Heart left ventricle (tissue), 16 donors: ENCODE measurements at regions of chr4 and their contacts with region 1.

Region 1: GRCh38 chr4:157372567-157372966 is 152.0 kb downstream of the GRIA2 start:
- DNase-seq: no peak
- ATAC-seq: no peak
- H3K4me3 ChIP-seq: no peak overlapping the region
- H3K27ac ChIP-seq: no peak overlapping the region
- H3K4me1 ChIP-seq: no peaks in the 10 kb centered on the region
- H3K27me3 ChIP-seq: no peaks in the 10 kb centered on the region
- CTCF ChIP-seq: no peak
- POLR2A ChIP-seq: no peak

Region 2: GRCh38 chr4:157014621-157015591 is 357.7 kb before region 1 on chr4:
- intact Hi-C with region 1: loop called in 1 of 10 experiments (anchors 5 kb)
- DNase-seq: no peak
- ATAC-seq: peak in 1 of 4 donors; percentile 27
- H3K4me3 ChIP-seq: no peak overlapping the region
- H3K27ac ChIP-seq: no peak overlapping the region
- H3K4me1 ChIP-seq: peaks cover 0 to 5% (median 0%) of the 10 kb centered on the region in 12 donors
- H3K27me3 ChIP-seq: no peaks in the 10 kb centered on the region
- CTCF ChIP-seq: no peak
- POLR2A ChIP-seq: no peak

Region 3: DNA sequence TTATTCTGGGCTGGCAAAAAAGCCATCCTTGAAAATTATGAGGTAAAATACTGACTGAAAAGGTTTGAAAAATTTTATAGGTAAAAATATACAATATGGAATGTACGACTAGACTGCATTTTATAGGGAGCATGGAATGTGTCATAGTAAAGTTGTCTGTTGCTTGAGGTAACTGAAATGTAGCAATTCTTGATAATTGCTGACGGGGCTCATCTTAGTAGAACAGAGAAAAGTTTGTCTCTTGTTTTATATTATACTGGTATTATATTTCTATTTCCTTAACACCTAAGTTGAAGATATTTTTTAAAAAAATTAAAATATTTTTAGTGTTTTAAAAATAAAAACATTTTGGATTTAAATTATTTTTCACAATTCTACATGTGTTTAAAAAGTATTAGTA is 141.0 kb before region 1 on chr4:
- intact Hi-C with region 1: no loop called
- DNase-seq: no peak
- ATAC-seq: no peak
- H3K4me3 ChIP-seq: no peak overlapping the region
- H3K27ac ChIP-seq: no peak overlapping the region
- H3K4me1 ChIP-seq: no peaks in the 10 kb centered on the region
- H3K27me3 ChIP-seq: peaks cover 0 to 3% (median 0%) of the 10 kb centered on the region in 9 donors
- CTCF ChIP-seq: no peak
- POLR2A ChIP-seq: no peak